Sigmoid colon (tissue), 7 donors: ENCODE measurements at regions of chr1 and their contacts with region 1.

Region 1: DNA sequence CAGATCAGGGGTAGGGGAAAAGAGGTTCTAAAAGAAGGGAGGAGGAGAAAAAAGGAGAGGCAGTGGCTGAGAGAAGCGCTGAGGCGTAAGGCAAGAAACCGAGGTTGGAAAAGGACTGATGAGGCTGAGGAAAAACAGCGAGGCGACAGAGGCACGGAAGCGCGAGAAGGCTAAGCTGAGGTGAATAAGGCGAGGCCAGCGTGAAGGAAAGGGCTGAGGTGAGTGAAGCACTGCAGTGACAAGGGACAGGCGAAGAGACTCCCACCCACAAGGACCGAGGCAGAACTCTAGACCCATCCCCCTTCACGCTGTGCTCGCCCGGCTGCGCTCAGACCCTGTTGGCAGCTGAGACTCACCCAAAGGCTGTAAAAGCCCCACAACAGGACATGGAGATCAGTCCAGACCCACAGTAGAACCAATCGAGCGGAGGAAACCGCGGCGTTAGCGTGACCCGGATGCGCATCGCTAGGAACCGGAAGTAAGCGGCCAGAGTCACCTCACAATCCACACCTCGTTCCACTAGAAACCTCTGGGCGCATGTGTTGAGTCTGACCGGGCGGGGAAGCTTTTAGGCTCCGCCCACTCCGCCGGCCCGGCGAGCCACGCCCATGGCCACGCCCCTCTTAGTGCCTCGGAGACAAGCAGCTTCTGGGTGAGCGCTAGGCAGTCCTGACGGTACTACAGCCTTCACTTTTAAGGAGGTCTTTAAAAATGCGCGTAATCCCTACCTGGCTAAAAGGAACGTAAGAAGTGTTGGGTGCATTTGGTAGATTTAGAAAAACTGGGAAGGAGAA is at the start of gene EYA3:
- DNase-seq: peak; percentile 99
- H3K4me3 ChIP-seq: peak within 1 kb of the TSS; percentile 81 to 88 (median 84)
- H3K27ac ChIP-seq: peak within 1 kb of the TSS; percentile 90 to 91 (median 90)
- H3K4me1 ChIP-seq: peaks cover 0 to 29% (median 19%) of the 10 kb centered on the region in 4 donors
- H3K27me3 ChIP-seq: no peaks in the 10 kb centered on the region
- CTCF ChIP-seq: no peak
- EP300 ChIP-seq: no peak
- POLR2A ChIP-seq: peak in 1 of 2 donors; percentile 29
- total RNA-seq, gene EYA3: 7.8 to 10.0 (median 8.8) TPM

Region 2: GRCh38 chr1:28208818-28209441 is 120.6 kb after region 1 on chr1:
- intact Hi-C with region 1: loop called (anchors 2 kb)
- DNase-seq: no peak
- H3K4me3 ChIP-seq: no peak overlapping the region
- H3K27ac ChIP-seq: no peak overlapping the region
- H3K4me1 ChIP-seq: peaks cover 0 to 6% (median 0%) of the 10 kb centered on the region in 4 donors
- H3K27me3 ChIP-seq: no peaks in the 10 kb centered on the region
- CTCF ChIP-seq: peak in 3 of 4 experiments; percentile 29 to 48 (median 43)
- EP300 ChIP-seq: no peak
- POLR2A ChIP-seq: no peak